ENCODE measurements at regions of chr5 and their contacts with region 1.

Region 1: DNA sequence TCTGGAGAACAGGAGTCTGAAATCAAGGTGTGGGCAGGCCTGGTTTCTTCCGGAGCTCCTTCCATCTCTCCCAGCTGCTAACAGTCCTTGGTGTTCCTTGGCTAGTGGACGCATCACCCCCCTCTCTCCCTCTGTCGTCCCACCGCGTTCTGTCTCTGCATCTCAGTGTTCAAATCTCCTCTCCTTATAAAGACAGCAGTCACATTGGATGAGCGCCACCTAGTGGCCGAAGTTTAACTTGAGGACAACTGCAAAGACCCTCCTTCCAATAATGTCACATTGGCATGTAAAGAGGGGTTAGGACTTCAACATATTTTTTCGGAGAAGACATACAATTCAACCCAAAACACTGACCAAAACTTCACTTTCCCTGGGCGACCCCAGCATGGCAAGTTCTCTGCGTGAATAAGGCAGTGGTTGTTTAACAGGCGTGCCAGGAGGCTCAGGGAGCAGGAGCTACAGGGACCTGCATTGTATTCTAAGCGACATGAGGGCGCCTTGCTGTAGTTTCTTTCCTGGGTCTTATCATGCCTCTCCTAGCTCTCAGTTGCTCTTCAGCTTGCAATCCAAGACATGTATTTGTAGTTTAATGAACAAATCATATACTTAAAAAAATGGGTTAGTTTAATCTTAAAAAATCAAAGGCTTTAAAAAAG is 27.9 kb upstream of the BASP1 start:
- DNase-seq: peak; percentile 91
- H3K4me3 ChIP-seq: no peak overlapping the region
- H3K27ac ChIP-seq: no peak overlapping the region
- H3K4me1 ChIP-seq: peaks cover 23% of the 10 kb centered on the region
- H3K27me3 ChIP-seq: no peaks in the 10 kb centered on the region
- CTCF ChIP-seq: peak; percentile 65 to 90
- POLR2A ChIP-seq: no peak

Region 2: GRCh38 chr5:16690243-16690852 is 499.2 kb before region 1 on chr5:
- CTCF ChIA-PET with region 1: interaction called, 41 read pairs
- POLR2A ChIA-PET with region 1: no interaction called
- dilution Hi-C with region 1: loop called (anchors 25 kb)
- intact Hi-C with region 1: loop called (anchors 1 kb)
- DNase-seq: peak; percentile 55
- H3K4me3 ChIP-seq: no peak overlapping the region
- H3K27ac ChIP-seq: no peak overlapping the region
- H3K4me1 ChIP-seq: no peaks in the 10 kb centered on the region
- H3K27me3 ChIP-seq: no peaks in the 10 kb centered on the region
- CTCF ChIP-seq: peak; percentile 63 to 82
- POLR2A ChIP-seq: no peak

Region 3: DNA sequence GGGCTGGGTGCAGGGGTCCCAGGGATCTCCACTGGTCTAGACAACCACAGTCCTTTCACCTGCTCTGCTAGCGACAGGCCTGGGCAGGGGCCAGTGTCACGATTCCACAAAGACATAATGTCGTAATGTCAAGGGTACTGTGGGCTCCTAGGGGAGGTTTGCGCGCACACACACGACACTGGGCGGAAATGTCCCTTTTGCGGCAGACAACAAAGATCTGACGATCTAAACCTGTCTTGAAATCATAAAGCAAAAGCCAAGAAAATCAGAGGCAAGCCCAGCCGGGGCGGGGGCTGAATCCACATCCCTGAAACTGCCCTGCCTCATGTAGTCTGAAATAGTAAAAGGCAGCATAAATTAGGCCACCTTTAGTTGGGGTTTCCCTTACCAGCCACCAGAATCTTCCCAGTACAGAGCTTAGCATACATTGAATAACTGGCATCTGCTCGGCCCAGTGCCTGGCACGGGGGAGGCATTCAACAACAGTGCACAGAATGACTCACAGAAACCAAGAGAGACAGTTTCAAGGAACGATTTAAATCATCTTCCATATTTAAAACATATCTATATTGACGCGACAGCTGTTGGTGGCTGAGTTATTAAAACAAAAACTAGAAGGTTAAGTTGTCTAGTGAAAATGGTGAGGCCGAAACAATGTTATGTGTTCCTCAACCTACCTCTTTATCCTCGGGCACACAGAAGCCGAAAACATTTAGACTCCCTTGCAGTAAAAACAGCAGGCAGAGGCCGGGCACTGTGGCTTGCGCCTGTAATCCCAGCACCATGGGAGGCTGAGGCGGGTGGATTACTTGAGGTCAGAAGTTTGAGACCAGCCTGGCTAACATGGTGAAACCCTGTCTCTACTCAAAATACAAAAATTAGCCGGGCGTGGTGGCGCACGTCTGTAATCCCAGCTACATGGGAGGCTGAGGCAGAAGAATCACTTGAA is 404.4 kb before region 1 on chr5:
- CTCF ChIA-PET with region 1: interaction called, 52 read pairs
- POLR2A ChIA-PET with region 1: no interaction called
- dilution Hi-C with region 1: loop called (anchors 25 kb)
- intact Hi-C with region 1: no loop called
- DNase-seq: no peak
- H3K4me3 ChIP-seq: no peak overlapping the region
- H3K27ac ChIP-seq: no peak overlapping the region
- H3K4me1 ChIP-seq: no peaks in the 10 kb centered on the region
- H3K27me3 ChIP-seq: no peaks in the 10 kb centered on the region
- CTCF ChIP-seq: no peak
- POLR2A ChIP-seq: no peak

Region 4: GRCh38 chr5:16855485-16855884 is 334.0 kb before region 1 on chr5:
- CTCF ChIA-PET with region 1: interaction called, 32 read pairs
- POLR2A ChIA-PET with region 1: no interaction called
- dilution Hi-C with region 1: no loop called
- intact Hi-C with region 1: loop called (anchors 2 kb)
- DNase-seq: peak; percentile 83
- H3K4me3 ChIP-seq: no peak overlapping the region
- H3K27ac ChIP-seq: peak overlapping the region; percentile 36
- H3K4me1 ChIP-seq: peaks cover 24% of the 10 kb centered on the region
- H3K27me3 ChIP-seq: no peaks in the 10 kb centered on the region
- CTCF ChIP-seq: no peak
- POLR2A ChIP-seq: no peak

Region 5: GRCh38 chr5:16992006-16992405 is 197.5 kb before region 1 on chr5:
- CTCF ChIA-PET with region 1: interaction called, 15 read pairs
- POLR2A ChIA-PET with region 1: no interaction called
- dilution Hi-C with region 1: no loop called
- intact Hi-C with region 1: loop called (anchors 5 kb)
- DNase-seq: peak; percentile 56
- H3K4me3 ChIP-seq: no peak overlapping the region
- H3K27ac ChIP-seq: peak overlapping the region; percentile 76
- H3K4me1 ChIP-seq: peaks cover 41% of the 10 kb centered on the region
- H3K27me3 ChIP-seq: no peaks in the 10 kb centered on the region
- CTCF ChIP-seq: no peak
- POLR2A ChIP-seq: no peak

Region 6: GRCh38 chr5:17118631-17119030 is 70.9 kb before region 1 on chr5:
- CTCF ChIA-PET with region 1: interaction called, 10 read pairs
- POLR2A ChIA-PET with region 1: no interaction called
- dilution Hi-C with region 1: no loop called
- intact Hi-C with region 1: loop called (anchors 1 kb)
- DNase-seq: peak; percentile 99
- H3K4me3 ChIP-seq: no peak overlapping the region
- H3K27ac ChIP-seq: peak overlapping the region; percentile 85
- H3K4me1 ChIP-seq: peaks cover 32% of the 10 kb centered on the region
- H3K27me3 ChIP-seq: no peaks in the 10 kb centered on the region
- CTCF ChIP-seq: no peak
- POLR2A ChIP-seq: peak; percentile 64

Region 7: GRCh38 chr5:17204133-17204489 is 14.6 kb after region 1 on chr5:
- CTCF ChIA-PET with region 1: interaction called, 17 read pairs
- POLR2A ChIA-PET with region 1: no interaction called
- dilution Hi-C with region 1: no loop called
- intact Hi-C with region 1: no loop called
- DNase-seq: no peak
- H3K4me3 ChIP-seq: no peak overlapping the region
- H3K27ac ChIP-seq: no peak overlapping the region
- H3K4me1 ChIP-seq: no peaks in the 10 kb centered on the region
- H3K27me3 ChIP-seq: peaks cover 5 to 8% of the 10 kb centered on the region in 2 experiments
- CTCF ChIP-seq: no peak
- POLR2A ChIP-seq: no peak